ENCODE measurements at regions of chr10 and their contacts with region 1.

Region 1: DNA sequence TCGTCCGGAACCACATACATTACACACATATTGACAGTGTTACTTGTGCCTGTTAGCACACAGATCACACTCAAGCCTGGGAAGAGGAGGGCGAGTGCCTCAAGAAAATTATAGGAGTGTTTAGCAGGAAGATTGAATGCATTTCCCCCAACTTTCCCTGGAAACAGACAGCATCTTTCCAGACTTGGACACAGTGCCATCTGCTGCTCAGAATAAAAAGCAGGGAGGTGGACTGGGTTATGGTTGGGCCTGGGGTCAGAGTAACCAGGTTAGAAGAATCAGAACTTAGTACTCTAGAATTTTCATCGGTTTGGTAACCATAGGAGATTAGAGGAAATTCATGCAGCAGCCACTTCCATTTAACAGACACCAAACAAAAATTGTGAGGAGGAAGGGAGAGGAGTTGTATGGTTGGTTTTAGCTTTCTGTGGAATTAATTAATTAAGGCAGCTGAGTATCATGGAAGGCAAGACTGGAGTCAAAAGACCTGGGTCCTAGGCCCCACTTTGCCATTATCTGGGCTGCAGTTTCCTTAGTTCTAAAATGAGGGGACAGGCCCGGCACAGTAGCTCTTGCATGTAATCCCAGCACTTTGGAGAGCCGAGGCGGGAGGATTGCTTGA is 43.4 kb upstream of the OPTN start:
- DNase-seq: peak in 1 of 10 donors; percentile 19

Region 2: GRCh38 chr10:12720217-12720981 is 336.2 kb before region 1 on chr10:
- intact Hi-C with region 1: loop called (anchors 10 kb)
- DNase-seq: peak in 4 of 10 donors; percentile 4 to 39 (median 31)

Measured in posterior cingulate gyrus (tissue), 11 donors.